Left ventricle myocardium superior (tissue), 1 donor: ENCODE measurements at regions of chr5 and their contacts with region 1.

Region 1: GRCh38 chr5:78294248-78295034 is at the start of gene AP3B1:
- DNase-seq: peak; percentile 100
- ATAC-seq: peak; percentile 97
- total RNA-seq, gene AP3B1: 25.5 TPM

Region 2: DNA sequence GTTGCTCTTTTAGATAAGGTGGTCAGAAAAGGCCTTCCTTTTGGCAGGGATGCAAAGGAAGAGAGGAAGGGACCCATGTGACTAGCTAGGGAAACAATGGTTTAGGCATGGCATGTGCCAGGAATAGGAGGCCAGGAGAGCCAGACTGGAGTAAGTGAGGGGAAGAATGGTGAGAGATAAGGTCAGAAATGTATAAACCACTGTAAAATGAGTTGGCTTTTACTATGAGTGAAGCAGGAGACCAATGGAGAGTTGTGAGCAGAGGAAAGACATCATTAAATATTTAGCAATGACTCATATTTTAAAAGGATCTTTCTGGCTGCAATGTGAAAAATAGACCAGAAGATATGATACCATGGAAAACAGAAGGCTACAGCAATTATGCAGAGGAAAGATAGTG is 50.8 kb before region 1 on chr5:
- intact Hi-C with region 1: no loop called
- DNase-seq: no peak
- ATAC-seq: no peak

Region 3: GRCh38 chr5:78359831-78360673 is 65.6 kb after region 1 on chr5 and contains the start of gene SCAMP1:
- intact Hi-C with region 1: loop called (anchors 5 kb)
- DNase-seq: peak; percentile 96
- ATAC-seq: peak; percentile 99
- total RNA-seq, gene SCAMP1: 31.6 TPM

Region 4: GRCh38 chr5:78490709-78491485 is 196.5 kb after region 1 on chr5:
- intact Hi-C with region 1: no loop called
- DNase-seq: no peak
- ATAC-seq: no peak